ENCODE measurements at regions of chr9 and their contacts with region 1.

Region 1: GRCh38 chr9:114906908-114907571 is 23.4 kb downstream of the TNFSF8 start:
- DNase-seq: no peak
- ATAC-seq: peak in 2 of 8 donors; percentile 17 to 37
- H3K4me3 ChIP-seq: no peak overlapping the region
- H3K27ac ChIP-seq: peak overlapping the region in 1 of 10 donors; percentile 29
- H3K4me1 ChIP-seq: peaks cover 0 to 23% (median 0%) of the 10 kb centered on the region in 9 donors
- H3K27me3 ChIP-seq: peaks cover 0 to 14% (median 5%) of the 10 kb centered on the region in 7 donors
- CTCF ChIP-seq: peak in 7 of 9 donors; percentile 18 to 65 (median 42)

Region 2: GRCh38 chr9:114405294-114406034 is 501.6 kb before region 1 on chr9:
- intact Hi-C with region 1: loop called (anchors 5 to 10 kb)
- DNase-seq: peak; percentile 52 to 84
- ATAC-seq: peak; percentile 87 to 95 (median 91)
- H3K4me3 ChIP-seq: no peak overlapping the region
- H3K27ac ChIP-seq: no peak overlapping the region
- H3K4me1 ChIP-seq: peaks cover 0 to 6% (median 0%) of the 10 kb centered on the region in 9 donors
- H3K27me3 ChIP-seq: peaks cover 0 to 3% (median 0%) of the 10 kb centered on the region in 7 donors
- CTCF ChIP-seq: peak; percentile 47 to 93 (median 85)

Region 3: DNA sequence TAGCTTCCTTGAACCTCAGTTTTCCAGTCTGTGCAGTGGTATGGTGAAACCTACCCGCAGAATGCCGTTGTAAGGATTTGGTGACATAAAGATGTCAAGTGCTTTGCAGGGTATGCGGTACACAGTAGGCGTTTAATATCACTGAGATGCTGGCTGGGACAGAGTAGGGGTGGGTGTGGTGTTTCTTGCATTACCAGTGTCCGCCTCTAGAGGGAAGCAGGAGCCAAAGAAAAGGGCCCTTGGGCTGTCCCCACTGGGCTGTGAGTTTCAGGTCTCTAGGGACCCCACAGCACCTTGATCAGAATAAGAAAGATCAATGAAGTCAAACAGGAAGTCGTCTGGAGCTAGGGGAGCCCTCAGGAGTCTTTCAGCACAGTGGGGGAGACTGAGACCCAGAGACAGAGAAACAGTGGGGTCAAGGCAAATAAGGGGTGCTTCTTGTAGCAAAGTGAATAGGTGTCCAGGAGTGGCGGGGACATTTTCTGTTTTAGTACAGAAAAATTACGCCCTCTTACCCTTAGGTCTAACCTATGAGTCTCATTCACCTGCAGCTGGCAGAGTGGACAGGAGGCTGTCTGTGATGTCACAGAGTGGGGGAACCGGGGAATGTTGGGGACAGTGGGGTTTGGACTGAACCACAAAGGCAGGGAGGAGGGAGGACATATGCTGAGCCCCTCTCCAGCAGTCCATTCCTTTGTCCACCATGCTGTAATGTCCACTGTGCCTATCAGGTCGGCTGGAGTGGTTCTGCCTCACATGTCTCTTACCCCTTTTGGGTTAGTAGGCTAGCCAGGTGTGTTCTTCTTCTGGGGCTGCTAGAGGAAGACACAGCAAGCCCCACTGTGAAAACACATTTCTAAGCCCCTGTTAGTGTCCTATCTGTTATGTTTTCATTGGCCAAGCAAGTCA is 244.7 kb before region 1 on chr9:
- intact Hi-C with region 1: loop called in 1 of 10 experiments (anchors 5 kb)
- DNase-seq: peak in 1 of 2 donors; percentile 31
- ATAC-seq: peak in 7 of 8 donors; percentile 67 to 81 (median 75)
- H3K4me3 ChIP-seq: no peak overlapping the region
- H3K27ac ChIP-seq: no peak overlapping the region
- H3K4me1 ChIP-seq: no peaks in the 10 kb centered on the region
- H3K27me3 ChIP-seq: peaks cover 0 to 40% (median 23%) of the 10 kb centered on the region in 7 donors
- CTCF ChIP-seq: peak; percentile 58 to 88 (median 73)

Region 4: DNA sequence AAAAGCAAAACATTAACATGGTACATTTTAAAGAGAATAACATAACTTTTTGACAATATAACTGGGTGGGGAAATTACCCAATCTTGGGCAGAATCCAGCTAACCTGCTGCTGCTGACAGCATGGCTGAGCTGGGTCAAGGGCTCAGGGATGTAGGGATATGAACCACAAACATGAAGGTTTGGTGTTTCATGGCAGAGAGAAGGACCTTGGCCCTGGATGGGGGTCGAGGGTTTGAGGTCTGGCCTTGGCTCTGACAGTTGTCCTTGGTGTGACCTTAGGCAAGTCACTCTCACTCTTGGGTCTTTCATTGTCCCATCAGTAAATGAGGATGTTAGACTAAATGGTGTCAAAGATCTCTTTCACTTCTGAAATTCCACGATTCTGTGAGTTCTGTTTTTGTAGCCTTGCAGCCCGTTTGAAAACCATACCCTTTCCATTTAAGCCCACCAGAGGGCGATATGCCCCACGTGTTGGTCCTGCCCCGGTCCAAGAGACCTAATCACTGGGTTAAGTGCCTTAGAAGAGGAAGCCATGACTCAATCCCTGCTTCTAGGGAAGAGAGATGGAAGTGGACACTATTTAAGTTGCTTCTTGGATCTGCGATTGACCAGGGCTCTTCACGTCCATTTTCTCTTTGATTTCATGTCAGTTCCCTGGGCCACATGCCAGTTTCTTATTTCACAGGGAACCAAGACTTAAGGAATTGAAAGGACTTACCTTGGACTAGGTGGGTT is 168.3 kb before region 1 on chr9:
- intact Hi-C with region 1: loop called (anchors 1 to 5 kb)
- DNase-seq: peak; percentile 21 to 69
- ATAC-seq: peak in 7 of 8 donors; percentile 79 to 96 (median 85)
- H3K4me3 ChIP-seq: no peak overlapping the region
- H3K27ac ChIP-seq: no peak overlapping the region
- H3K4me1 ChIP-seq: peaks cover 0 to 13% (median 0%) of the 10 kb centered on the region in 9 donors
- H3K27me3 ChIP-seq: peaks cover 0 to 13% (median 3%) of the 10 kb centered on the region in 7 donors
- CTCF ChIP-seq: peak; percentile 49 to 86 (median 76)

Region 5: GRCh38 chr9:114852050-114852594 is 54.9 kb before region 1 on chr9:
- intact Hi-C with region 1: no loop called
- DNase-seq: no peak
- ATAC-seq: peak in 3 of 8 donors; percentile 33 to 77 (median 38)
- H3K4me3 ChIP-seq: no peak overlapping the region
- H3K27ac ChIP-seq: no peak overlapping the region
- H3K4me1 ChIP-seq: peaks cover 0 to 23% (median 0%) of the 10 kb centered on the region in 9 donors
- H3K27me3 ChIP-seq: no peaks in the 10 kb centered on the region
- CTCF ChIP-seq: no peak

Region 6: GRCh38 chr9:115022760-115023434 is 115.9 kb after region 1 on chr9:
- intact Hi-C with region 1: no loop called
- DNase-seq: no peak
- ATAC-seq: no peak
- H3K4me3 ChIP-seq: no peak overlapping the region
- H3K27ac ChIP-seq: no peak overlapping the region
- H3K4me1 ChIP-seq: no peaks in the 10 kb centered on the region
- H3K27me3 ChIP-seq: peaks cover 0 to 11% (median 4%) of the 10 kb centered on the region in 7 donors
- CTCF ChIP-seq: no peak

Region 7: GRCh38 chr9:115071176-115071575 is 164.1 kb after region 1 on chr9:
- intact Hi-C with region 1: no loop called
- DNase-seq: no peak
- ATAC-seq: no peak
- H3K4me3 ChIP-seq: no peak overlapping the region
- H3K27ac ChIP-seq: no peak overlapping the region
- H3K4me1 ChIP-seq: no peaks in the 10 kb centered on the region
- H3K27me3 ChIP-seq: peaks cover 0 to 5% (median 4%) of the 10 kb centered on the region in 7 donors
- CTCF ChIP-seq: no peak

Region 8: DNA sequence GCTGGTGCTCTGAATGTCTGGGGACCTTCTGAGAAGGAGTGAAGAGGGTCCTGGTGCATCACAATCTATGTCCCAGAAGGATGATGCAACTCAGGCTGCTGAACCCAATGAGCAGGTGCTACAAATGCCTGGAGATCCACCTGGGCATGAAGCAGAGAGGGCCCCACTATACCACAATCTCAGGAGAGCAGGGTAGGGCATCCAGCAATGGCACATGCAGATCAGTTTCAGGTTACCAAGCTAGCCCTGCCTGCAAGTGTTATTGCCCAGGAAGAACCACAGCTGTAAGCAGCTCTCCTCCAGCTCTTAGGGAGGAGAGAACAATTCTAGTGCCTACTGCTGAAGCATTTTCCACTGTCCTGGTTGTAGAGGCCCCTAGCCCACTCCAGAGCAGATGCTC is 600.1 kb after region 1 on chr9:
- intact Hi-C with region 1: no loop called
- DNase-seq: no peak
- ATAC-seq: no peak
- H3K4me3 ChIP-seq: no peak overlapping the region
- H3K27ac ChIP-seq: no peak overlapping the region
- H3K4me1 ChIP-seq: no peaks in the 10 kb centered on the region
- H3K27me3 ChIP-seq: no peaks in the 10 kb centered on the region
- CTCF ChIP-seq: no peak

Measured in heart right ventricle (tissue), 16 donors.